IMR-90 (cell line): ENCODE measurements at regions of chr14 and their contacts with region 1.

Region 1: DNA sequence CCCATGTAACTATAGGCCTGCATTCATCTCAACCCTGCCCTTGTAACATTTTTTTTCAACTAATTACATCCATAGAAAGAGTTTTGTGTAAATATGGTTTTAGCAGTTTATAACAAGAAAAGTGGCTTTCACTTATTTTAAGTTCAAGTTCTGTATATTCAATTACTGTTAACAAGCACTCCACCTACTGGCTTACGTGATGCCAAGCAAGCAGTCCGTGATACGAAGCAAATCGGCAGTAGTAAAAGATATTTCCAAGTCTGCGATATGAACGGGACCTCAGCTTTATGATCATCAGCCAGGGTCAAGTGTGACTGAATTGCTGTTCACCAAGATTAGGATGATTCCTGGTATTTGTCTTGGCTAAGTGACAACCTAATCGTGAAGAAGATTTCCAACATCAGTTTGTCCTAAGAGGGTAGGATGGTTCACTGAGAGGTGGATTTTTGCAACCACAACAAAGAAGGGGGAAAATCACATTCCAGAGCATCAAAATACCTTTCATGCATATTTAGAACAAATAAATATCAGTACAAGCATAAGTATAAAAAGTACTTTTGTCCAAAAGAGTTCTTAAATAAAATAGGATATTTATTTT is 456.2 kb downstream of the FOXG1 start:
- DNase-seq: peak; percentile 73
- ATAC-seq: peak; percentile 88
- H3K4me3 ChIP-seq: no peak overlapping the region
- H3K27ac ChIP-seq: no peak overlapping the region
- H3K4me1 ChIP-seq: no peaks in the 10 kb centered on the region; the same call in 1 of the 2 replicates
- H3K27me3 ChIP-seq: no peaks in the 10 kb centered on the region
- CTCF ChIP-seq: peak; percentile 78
- POLR2A ChIP-seq: no peak
- RAD21 ChIP-seq: peak; percentile 79

Region 2: DNA sequence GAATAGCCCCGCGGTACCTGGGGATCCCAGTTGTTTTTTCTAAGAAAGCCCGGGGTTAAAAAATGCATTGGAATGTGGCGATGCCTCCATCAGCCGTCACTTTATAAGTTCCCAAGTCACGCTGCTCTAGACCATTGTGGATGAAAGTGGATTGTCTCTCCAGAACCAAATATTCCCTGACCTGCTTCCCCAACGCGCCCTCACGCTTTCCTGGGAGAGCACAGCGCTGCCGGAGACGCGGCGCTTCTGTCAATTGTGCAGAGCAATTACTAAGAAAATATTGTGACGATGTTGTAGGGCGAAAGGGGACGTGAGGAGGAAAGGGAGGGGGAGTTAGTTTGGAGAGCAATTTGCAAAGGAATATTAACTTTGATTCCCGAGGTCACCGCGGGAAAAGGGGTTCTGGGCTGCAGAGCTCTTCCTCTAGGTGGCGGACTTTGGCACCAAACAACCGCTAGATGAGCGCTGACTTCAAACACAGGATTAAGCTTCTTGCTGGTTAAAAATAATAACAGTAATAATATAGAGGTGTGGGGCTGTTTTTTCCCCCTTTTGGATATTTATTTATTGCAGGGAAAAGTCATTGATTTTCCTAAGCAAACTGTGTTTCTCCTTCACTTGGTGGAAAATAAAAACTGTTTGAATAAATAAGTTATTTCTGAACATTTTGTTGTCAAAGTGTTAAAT is 465.7 kb before region 1 on chr14:
- CTCF ChIA-PET with region 1: interaction called, 5 read pairs
- POLR2A ChIA-PET with region 1: no interaction called
- dilution Hi-C with region 1: no loop called
- in situ Hi-C with region 1: no loop called
- intact Hi-C with region 1: loop called (anchors 1 kb)
- DNase-seq: peak; percentile 54
- ATAC-seq: peak; percentile 59; the same call in 1 of the 2 replicates
- H3K4me3 ChIP-seq: peak overlapping the region; percentile 13; the same call in 1 of the 2 replicates
- H3K27ac ChIP-seq: no peak overlapping the region
- H3K4me1 ChIP-seq: no peaks in the 10 kb centered on the region
- H3K27me3 ChIP-seq: peaks cover 68% of the 10 kb centered on the region
- CTCF ChIP-seq: peak; percentile 68
- POLR2A ChIP-seq: no peak
- RAD21 ChIP-seq: peak; percentile 51

Region 3: GRCh38 chr14:29016050-29016900 is 206.5 kb before region 1 on chr14:
- CTCF ChIA-PET with region 1: interaction called, 5 read pairs
- POLR2A ChIA-PET with region 1: interaction called, 4 read pairs
- dilution Hi-C with region 1: no loop called
- in situ Hi-C with region 1: loop called (anchors 10 kb)
- intact Hi-C with region 1: loop called (anchors 1 kb)
- DNase-seq: peak; percentile 51
- ATAC-seq: peak; percentile 67
- H3K4me3 ChIP-seq: no peak overlapping the region
- H3K27ac ChIP-seq: no peak overlapping the region
- H3K4me1 ChIP-seq: no peaks in the 10 kb centered on the region
- H3K27me3 ChIP-seq: no peaks in the 10 kb centered on the region; the same call in 1 of the 2 replicates
- CTCF ChIP-seq: peak; percentile 74
- POLR2A ChIP-seq: no peak
- RAD21 ChIP-seq: peak; percentile 74

Region 4: DNA sequence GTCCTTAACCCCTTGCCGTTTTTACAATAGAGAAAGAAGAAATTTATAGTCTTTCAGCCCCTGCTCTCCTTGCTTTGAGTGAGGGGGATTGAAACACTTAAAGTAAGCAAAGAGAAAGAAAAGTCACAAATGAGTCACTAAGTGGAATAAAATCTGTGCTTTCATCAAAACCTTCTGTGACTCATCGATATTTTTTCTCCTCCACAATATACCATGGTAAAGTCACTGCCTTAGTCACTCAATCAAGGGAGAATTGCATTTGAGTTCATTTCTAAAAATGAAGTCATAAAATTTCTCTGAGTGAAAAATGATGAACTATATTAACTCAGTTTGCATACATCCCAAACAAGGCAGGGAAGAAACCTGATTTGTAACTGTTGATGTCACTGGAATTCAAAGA is 14.1 kb after region 1 on chr14:
- CTCF ChIA-PET with region 1: interaction called, 11 read pairs
- POLR2A ChIA-PET with region 1: no interaction called
- dilution Hi-C with region 1: no loop called
- in situ Hi-C with region 1: no loop called
- intact Hi-C with region 1: no loop called
- DNase-seq: peak; percentile 92
- ATAC-seq: peak; percentile 77
- H3K4me3 ChIP-seq: no peak overlapping the region
- H3K27ac ChIP-seq: no peak overlapping the region; the same call in 1 of the 2 replicates
- H3K4me1 ChIP-seq: peaks cover 6% of the 10 kb centered on the region
- H3K27me3 ChIP-seq: no peaks in the 10 kb centered on the region
- CTCF ChIP-seq: no peak
- POLR2A ChIP-seq: no peak
- RAD21 ChIP-seq: no peak

Region 5: DNA sequence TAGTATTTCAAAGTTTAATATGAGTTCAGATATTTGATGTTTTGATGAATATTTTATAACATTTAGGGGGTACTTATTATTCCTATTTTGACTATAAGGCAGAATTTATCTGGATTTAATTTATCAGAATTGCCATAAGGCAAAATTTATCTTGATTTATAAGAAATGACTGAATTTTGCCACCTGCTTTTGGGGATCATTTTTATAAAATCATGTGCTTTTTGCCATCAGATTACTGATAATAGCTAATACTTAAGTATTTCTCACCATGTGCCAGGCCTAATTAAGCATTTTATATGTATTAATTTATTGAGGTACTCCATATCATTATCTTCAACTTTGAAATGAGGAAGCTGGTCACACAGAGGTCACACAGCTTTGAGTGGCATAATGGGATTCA is 281.1 kb after region 1 on chr14:
- CTCF ChIA-PET with region 1: no interaction called
- POLR2A ChIA-PET with region 1: no interaction called
- dilution Hi-C with region 1: no loop called
- in situ Hi-C with region 1: no loop called
- intact Hi-C with region 1: no loop called
- DNase-seq: no peak
- ATAC-seq: no peak
- H3K4me3 ChIP-seq: no peak overlapping the region
- H3K27ac ChIP-seq: no peak overlapping the region
- H3K4me1 ChIP-seq: no peaks in the 10 kb centered on the region
- H3K27me3 ChIP-seq: no peaks in the 10 kb centered on the region
- CTCF ChIP-seq: no peak
- POLR2A ChIP-seq: no peak
- RAD21 ChIP-seq: no peak

Region 6: DNA sequence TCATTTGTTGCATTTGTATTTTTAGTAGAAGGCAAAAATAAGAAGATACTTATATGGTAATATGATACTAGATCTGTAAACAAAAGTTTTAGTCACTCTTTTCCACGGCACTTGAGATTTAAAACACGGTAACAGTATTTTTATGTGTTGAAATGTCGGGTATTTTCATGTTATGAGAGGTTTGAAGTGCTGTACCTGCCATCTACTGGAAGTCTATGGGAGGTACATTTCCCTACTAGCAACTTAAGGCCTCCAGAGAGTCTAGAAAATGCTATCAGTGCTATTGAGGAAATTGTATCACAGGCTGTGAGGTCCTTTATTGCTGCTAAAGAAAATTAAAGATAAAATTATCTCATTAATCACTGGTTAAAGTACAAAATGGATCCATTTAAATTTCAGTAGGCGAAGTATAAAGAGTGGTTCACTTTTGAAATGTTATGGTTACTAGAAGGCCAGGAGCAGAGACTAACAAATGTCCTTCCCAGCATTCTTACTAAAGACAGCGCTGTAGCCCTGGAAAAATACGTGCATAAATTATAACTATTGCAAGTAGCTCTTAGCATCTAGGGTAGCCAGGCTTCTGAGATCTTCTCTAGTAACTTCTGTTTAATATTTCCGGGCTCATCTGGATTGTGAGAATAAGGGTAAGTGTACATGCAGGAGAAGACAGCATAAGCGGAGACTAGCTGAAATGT is 782.5 kb after region 1 on chr14:
- CTCF ChIA-PET with region 1: no interaction called
- POLR2A ChIA-PET with region 1: no interaction called
- dilution Hi-C with region 1: no loop called
- in situ Hi-C with region 1: no loop called
- intact Hi-C with region 1: loop called (anchors 10 kb)
- DNase-seq: peak; percentile 89
- ATAC-seq: peak; percentile 98
- H3K4me3 ChIP-seq: no peak overlapping the region
- H3K27ac ChIP-seq: no peak overlapping the region
- H3K4me1 ChIP-seq: no peaks in the 10 kb centered on the region
- H3K27me3 ChIP-seq: no peaks in the 10 kb centered on the region
- CTCF ChIP-seq: peak; percentile 87
- POLR2A ChIP-seq: no peak
- RAD21 ChIP-seq: peak; percentile 91